Sigmoid colon (tissue), 7 donors: ENCODE measurements at regions of chr22 and their contacts with region 1.

Region 1: DNA sequence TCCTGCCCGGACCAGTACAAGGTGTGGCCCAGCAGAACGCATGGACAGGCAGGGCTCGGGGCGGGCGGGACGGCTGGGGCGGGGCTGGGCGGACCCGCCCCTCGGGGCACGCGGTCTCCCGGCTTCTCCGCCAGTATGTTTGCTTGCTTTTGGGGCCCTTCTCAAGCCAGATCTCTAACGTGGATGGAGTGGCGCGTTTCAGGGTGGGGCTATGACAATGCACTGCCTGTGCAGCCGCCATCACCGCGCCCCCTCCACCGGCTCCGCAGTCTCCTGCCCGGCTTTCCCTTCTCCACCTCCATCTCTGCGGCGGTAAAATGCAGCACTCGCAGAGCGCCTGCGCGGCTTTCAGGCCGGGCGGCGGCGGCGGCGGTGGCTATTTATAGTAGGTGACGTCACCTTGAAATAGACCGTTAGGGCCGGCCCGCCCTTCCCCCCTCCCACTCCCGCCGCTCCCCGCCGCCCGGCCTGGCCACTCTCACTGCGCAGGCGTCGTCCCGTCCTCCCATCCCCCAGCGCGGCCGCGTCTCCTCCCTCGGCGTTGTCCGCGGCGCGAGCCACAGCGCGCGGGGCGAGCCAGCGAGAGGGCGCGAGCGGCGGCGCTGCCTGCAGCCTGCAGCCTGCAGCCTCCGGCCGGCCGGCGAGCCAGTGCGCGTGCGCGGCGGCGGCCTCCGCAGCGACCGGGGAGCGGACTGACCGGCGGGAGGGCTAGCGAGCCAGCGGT is at the start of gene YWHAH:
- DNase-seq: peak; percentile 98
- H3K4me3 ChIP-seq: peak within 1 kb of the TSS; percentile 81 to 96 (median 87)
- H3K27ac ChIP-seq: peak within 1 kb of the TSS; percentile 95 to 100 (median 98)
- H3K4me1 ChIP-seq: peaks cover 0 to 37% (median 24%) of the 10 kb centered on the region in 4 donors
- H3K27me3 ChIP-seq: no peaks in the 10 kb centered on the region
- CTCF ChIP-seq: no peak
- EP300 ChIP-seq: no peak
- POLR2A ChIP-seq: no peak
- total RNA-seq, gene YWHAH: 91.8 to 114 (median 101) TPM

Region 2: DNA sequence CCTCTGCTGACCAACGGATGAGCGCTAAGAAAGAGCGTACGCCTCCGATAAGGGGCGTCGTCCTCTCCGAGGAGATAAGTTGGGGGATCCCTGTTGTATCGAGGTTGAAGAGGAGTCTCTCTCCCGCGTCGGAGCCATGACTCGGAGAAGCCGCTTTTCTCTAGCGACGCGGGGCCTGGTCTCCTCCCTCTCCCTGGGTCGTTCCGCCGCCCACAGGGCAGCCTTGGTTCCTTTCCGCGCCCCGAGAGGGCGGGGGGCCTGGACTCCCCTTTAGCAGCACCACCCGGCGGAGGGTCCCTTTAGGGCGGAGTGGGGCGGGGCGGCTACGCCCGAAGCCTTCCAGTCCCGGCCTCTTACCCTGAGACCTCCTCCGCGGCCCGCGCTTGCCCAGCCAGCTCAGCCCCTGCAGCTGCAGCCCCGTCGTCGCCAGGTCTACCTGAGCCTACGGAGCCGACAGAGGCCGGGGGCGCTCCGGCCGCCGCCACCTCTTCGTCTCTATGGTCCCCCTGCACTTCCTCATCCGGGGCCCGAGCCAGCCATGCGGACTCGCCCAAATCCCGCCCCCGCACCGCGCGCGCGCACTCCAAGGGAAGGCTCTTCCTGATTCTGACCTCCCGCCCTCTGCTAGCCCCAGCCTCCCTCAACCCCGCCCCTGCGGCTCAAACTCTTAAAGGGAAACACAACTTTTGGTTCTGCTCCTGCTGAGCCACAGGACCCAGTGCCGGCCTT is 194.3 kb before region 1 on chr22 and contains the start of gene PRR14L:
- intact Hi-C with region 1: loop called (anchors 10 kb)
- DNase-seq: peak; percentile 99
- H3K4me3 ChIP-seq: peak within 1 kb of the TSS; percentile 88 to 98 (median 94)
- H3K27ac ChIP-seq: peak within 1 kb of the TSS; percentile 86 to 92 (median 90)
- H3K4me1 ChIP-seq: peaks cover 0 to 45% (median 41%) of the 10 kb centered on the region in 4 donors
- H3K27me3 ChIP-seq: no peaks in the 10 kb centered on the region
- CTCF ChIP-seq: no peak
- EP300 ChIP-seq: peak in 1 of 4 donors; percentile 59
- POLR2A ChIP-seq: peak; percentile 55 to 77
- total RNA-seq, gene PRR14L: 10.2 to 24.4 (median 14.5) TPM

Region 3: GRCh38 chr22:31970490-31971444 is 26.6 kb after region 1 on chr22:
- intact Hi-C with region 1: loop called (anchors 1 kb)
- DNase-seq: peak; percentile 88
- H3K4me3 ChIP-seq: peak overlapping the region; percentile 7 to 45 (median 28)
- H3K27ac ChIP-seq: no peak overlapping the region
- H3K4me1 ChIP-seq: peaks cover 0 to 12% (median 11%) of the 10 kb centered on the region in 4 donors
- H3K27me3 ChIP-seq: no peaks in the 10 kb centered on the region
- CTCF ChIP-seq: peak; percentile 73 to 81 (median 77)
- EP300 ChIP-seq: no peak
- POLR2A ChIP-seq: no peak

Region 4: GRCh38 chr22:32237906-32238305 is 293.8 kb after region 1 on chr22:
- intact Hi-C with region 1: no loop called
- DNase-seq: no peak
- H3K4me3 ChIP-seq: no peak overlapping the region
- H3K27ac ChIP-seq: no peak overlapping the region
- H3K4me1 ChIP-seq: no peaks in the 10 kb centered on the region
- H3K27me3 ChIP-seq: no peaks in the 10 kb centered on the region
- CTCF ChIP-seq: no peak
- EP300 ChIP-seq: no peak
- POLR2A ChIP-seq: no peak